ENCODE measurements at regions of chr17 and their contacts with region 1.

Region 1: GRCh38 chr17:40854159-40854814 is 12.7 kb downstream of the KRT12 start:
- DNase-seq: peak; percentile 87
- H3K4me3 Mint-ChIP-seq: no peak overlapping the region
- H3K27ac Mint-ChIP-seq: peak overlapping the region; percentile 95
- H3K4me1 Mint-ChIP-seq: peaks cover 38% of the 10 kb centered on the region
- H3K27me3 Mint-ChIP-seq: no peaks in the 10 kb centered on the region
- CTCF ChIP-seq: no peak

Region 2: GRCh38 chr17:40485851-40486512 is 368.3 kb before region 1 on chr17:
- CTCF ChIA-PET with region 1: no interaction called
- POLR2A ChIA-PET with region 1: no interaction called
- intact Hi-C with region 1: no loop called
- DNase-seq: peak; percentile 98
- H3K4me3 Mint-ChIP-seq: peak overlapping the region; percentile 54
- H3K27ac Mint-ChIP-seq: peak overlapping the region; percentile 89
- H3K4me1 Mint-ChIP-seq: peaks cover 83% of the 10 kb centered on the region
- H3K27me3 Mint-ChIP-seq: no peaks in the 10 kb centered on the region
- CTCF ChIP-seq: no peak

Region 3: GRCh38 chr17:40803617-40804082 is 50.6 kb before region 1 on chr17:
- CTCF ChIA-PET with region 1: interaction called, 11 read pairs
- POLR2A ChIA-PET with region 1: interaction called, 8 read pairs
- intact Hi-C with region 1: loop called (anchors 1 kb)
- DNase-seq: peak; percentile 84
- H3K4me3 Mint-ChIP-seq: no peak overlapping the region
- H3K27ac Mint-ChIP-seq: no peak overlapping the region
- H3K4me1 Mint-ChIP-seq: no peaks in the 10 kb centered on the region
- H3K27me3 Mint-ChIP-seq: no peaks in the 10 kb centered on the region
- CTCF ChIP-seq: peak; percentile 86

Region 4: GRCh38 chr17:40818733-40819527 is 35.4 kb before region 1 on chr17:
- CTCF ChIA-PET with region 1: interaction called, 3 read pairs
- POLR2A ChIA-PET with region 1: interaction called, 352 read pairs
- intact Hi-C with region 1: loop called (anchors 1 kb)
- DNase-seq: peak; percentile 69
- H3K4me3 Mint-ChIP-seq: peak overlapping the region; percentile 83
- H3K27ac Mint-ChIP-seq: peak overlapping the region; percentile 95
- H3K4me1 Mint-ChIP-seq: peaks cover 28% of the 10 kb centered on the region
- H3K27me3 Mint-ChIP-seq: no peaks in the 10 kb centered on the region
- CTCF ChIP-seq: no peak

Region 5: DNA sequence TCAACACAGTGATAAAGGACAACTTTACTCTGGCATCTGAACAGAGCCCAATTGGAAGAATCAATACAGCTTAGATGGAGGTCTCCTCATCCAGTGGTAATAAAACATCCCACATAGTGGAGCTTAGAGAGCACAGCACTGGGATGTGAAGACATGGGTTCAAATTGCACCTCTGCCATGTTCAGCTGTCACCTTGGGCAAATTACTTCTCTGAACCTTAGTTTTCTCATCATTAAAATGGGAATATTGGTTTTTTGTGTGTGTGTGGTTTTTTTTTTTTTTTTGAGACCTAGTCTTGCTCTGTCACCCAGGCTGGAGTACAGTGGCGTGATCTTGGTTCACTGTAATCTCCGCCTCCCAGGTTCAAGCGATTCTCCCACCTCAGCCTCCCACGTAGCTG is 18.3 kb before region 1 on chr17:
- CTCF ChIA-PET with region 1: no interaction called
- POLR2A ChIA-PET with region 1: interaction called, 352 read pairs
- intact Hi-C with region 1: no loop called
- DNase-seq: no peak
- H3K4me3 Mint-ChIP-seq: no peak overlapping the region
- H3K27ac Mint-ChIP-seq: no peak overlapping the region
- H3K4me1 Mint-ChIP-seq: peaks cover 4% of the 10 kb centered on the region
- H3K27me3 Mint-ChIP-seq: no peaks in the 10 kb centered on the region
- CTCF ChIP-seq: no peak

Region 6: GRCh38 chr17:40873255-40873654 is 19.0 kb after region 1 on chr17:
- CTCF ChIA-PET with region 1: interaction called, 11 read pairs
- POLR2A ChIA-PET with region 1: no interaction called
- intact Hi-C with region 1: no loop called
- DNase-seq: no peak
- H3K4me3 Mint-ChIP-seq: no peak overlapping the region
- H3K27ac Mint-ChIP-seq: no peak overlapping the region
- H3K4me1 Mint-ChIP-seq: no peaks in the 10 kb centered on the region
- H3K27me3 Mint-ChIP-seq: no peaks in the 10 kb centered on the region
- CTCF ChIP-seq: peak; percentile 6

Region 7: GRCh38 chr17:41322094-41322902 is 468.0 kb after region 1 on chr17:
- CTCF ChIA-PET with region 1: interaction called, 17 read pairs
- POLR2A ChIA-PET with region 1: interaction called, 5 read pairs
- intact Hi-C with region 1: no loop called
- DNase-seq: peak; percentile 61
- H3K4me3 Mint-ChIP-seq: no peak overlapping the region
- H3K27ac Mint-ChIP-seq: no peak overlapping the region
- H3K4me1 Mint-ChIP-seq: no peaks in the 10 kb centered on the region
- H3K27me3 Mint-ChIP-seq: no peaks in the 10 kb centered on the region
- CTCF ChIP-seq: peak; percentile 76

Region 8: DNA sequence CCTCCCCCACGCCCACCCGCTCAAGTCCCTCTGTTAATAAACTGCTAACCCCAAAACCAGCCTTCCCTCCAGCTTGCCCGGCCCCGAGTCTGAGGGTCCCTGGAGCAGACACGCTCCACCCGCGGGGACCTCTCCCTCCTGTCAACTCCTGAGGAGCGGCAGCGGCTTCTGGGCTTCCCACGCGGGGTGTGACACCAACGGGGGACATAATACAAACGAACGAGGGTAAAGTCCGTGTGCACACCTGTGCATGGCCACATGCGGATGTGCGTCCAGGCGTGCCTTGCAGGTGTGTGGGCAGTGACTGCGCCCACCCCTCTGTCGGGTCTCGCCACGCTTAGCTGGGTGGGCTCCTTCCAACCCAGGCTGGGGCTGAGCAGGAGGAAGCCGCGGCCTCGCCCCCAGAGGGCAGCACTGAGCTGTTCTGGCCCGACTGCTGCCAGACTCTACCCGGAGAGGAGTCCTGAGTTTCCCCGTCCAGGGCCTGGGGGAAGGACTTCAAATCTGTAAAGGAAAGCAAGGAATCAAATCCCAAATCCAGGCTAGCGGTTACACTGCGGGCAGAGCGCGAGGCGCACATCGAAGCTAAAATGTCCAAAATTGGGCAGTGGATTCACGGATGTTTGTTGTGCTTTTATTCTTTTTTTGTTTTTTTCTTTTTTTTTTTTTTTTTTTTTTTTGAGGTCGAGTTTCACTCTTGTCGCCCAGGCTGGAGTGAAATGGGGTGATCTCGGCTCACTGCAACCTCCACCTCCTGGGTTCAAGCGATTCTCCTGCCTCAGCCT is 794.3 kb after region 1 on chr17:
- CTCF ChIA-PET with region 1: interaction called, 8 read pairs
- POLR2A ChIA-PET with region 1: interaction called, 4 read pairs
- intact Hi-C with region 1: loop called (anchors 5 kb)
- DNase-seq: peak; percentile 87
- H3K4me3 Mint-ChIP-seq: peak overlapping the region; percentile 22
- H3K27ac Mint-ChIP-seq: peak overlapping the region; percentile 93
- H3K4me1 Mint-ChIP-seq: peaks cover 34% of the 10 kb centered on the region
- H3K27me3 Mint-ChIP-seq: no peaks in the 10 kb centered on the region
- CTCF ChIP-seq: peak; percentile 88

Measured in MCF 10A (cell line).